H1 (cell line): ENCODE measurements at regions of chr3 and their contacts with region 1.

Region 1: GRCh38 chr3:141071681-141072260 is 20.6 kb downstream of the SPSB4 start:
- DNase-seq: no peak
- H3K4me3 ChIP-seq: peak overlapping the region in 3 of 4 experiments; percentile 0 to 6 (median 2); a peak in 2 of 8 replicates
- H3K27ac ChIP-seq: no peak overlapping the region
- H3K4me1 ChIP-seq: peaks cover 35 to 60% (median 49%) of the 10 kb centered on the region in 4 experiments
- H3K27me3 ChIP-seq: peaks cover 0 to 18% (median 8%) of the 10 kb centered on the region in 4 experiments; a peak in 4 of 7 replicates
- CTCF ChIP-seq: no peak
- EP300 ChIP-seq: no peak
- POLR2A ChIP-seq: no peak
- RAD21 ChIP-seq: no peak

Region 2: DNA sequence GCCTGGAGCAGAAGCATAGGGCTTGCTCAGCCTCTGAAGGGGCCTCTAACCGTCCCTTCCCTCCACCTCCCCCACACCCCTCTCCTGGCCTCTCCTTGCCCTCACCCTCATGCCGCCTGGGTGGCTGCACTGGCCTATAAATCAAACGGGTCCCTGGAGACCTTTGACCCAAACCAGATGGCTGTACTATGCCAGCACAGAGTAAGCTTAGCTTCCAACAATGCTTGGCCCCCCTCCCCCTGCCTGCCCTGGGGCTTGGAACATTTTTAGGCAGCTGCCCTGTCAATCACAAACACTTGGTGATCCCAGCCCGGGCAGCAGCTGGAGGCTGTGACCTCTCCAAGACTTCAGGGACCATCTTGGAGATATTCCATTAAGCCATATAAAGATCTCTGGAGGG is 12.5 kb after region 1 on chr3:
- CTCF ChIA-PET with region 1: interaction called, 79 read pairs
- POLR2A ChIA-PET with region 1: interaction called, 20 read pairs
- DNase-seq: no peak
- H3K4me3 ChIP-seq: no peak overlapping the region
- H3K27ac ChIP-seq: no peak overlapping the region
- H3K4me1 ChIP-seq: peaks cover 19 to 47% (median 22%) of the 10 kb centered on the region in 4 experiments
- H3K27me3 ChIP-seq: no peaks in the 10 kb centered on the region
- CTCF ChIP-seq: no peak
- EP300 ChIP-seq: no peak
- POLR2A ChIP-seq: no peak
- RAD21 ChIP-seq: no peak

Region 3: DNA sequence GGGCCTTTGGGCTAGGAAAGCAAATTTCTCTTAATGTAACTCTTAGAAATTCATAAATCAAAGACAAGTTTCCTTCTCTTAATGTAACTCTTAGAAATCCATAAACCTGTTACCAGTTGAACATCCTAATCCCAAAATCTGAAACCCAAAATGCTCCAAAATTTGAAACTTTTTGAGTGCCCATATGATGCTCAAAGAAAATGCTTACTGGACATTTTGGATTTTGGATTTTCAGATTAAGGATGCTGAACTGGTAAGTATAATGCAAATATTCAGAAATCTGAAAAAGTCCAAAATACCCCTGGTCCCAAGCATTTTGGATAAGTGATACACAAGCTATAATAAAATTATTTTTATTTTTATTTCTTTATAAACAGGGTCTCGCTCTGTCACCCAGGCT is 245.1 kb after region 1 on chr3:
- CTCF ChIA-PET with region 1: no interaction called
- POLR2A ChIA-PET with region 1: no interaction called
- DNase-seq: no peak
- H3K4me3 ChIP-seq: no peak overlapping the region
- H3K27ac ChIP-seq: no peak overlapping the region
- H3K4me1 ChIP-seq: peaks cover 0 to 3% (median under 1%) of the 10 kb centered on the region in 4 experiments; a peak in 1 of 7 replicates
- H3K27me3 ChIP-seq: no peaks in the 10 kb centered on the region; a peak in 1 of 7 replicates
- CTCF ChIP-seq: no peak
- EP300 ChIP-seq: no peak
- POLR2A ChIP-seq: no peak
- RAD21 ChIP-seq: no peak